ENCODE measurements at regions of chr5 and their contacts with region 1.

Region 1: DNA sequence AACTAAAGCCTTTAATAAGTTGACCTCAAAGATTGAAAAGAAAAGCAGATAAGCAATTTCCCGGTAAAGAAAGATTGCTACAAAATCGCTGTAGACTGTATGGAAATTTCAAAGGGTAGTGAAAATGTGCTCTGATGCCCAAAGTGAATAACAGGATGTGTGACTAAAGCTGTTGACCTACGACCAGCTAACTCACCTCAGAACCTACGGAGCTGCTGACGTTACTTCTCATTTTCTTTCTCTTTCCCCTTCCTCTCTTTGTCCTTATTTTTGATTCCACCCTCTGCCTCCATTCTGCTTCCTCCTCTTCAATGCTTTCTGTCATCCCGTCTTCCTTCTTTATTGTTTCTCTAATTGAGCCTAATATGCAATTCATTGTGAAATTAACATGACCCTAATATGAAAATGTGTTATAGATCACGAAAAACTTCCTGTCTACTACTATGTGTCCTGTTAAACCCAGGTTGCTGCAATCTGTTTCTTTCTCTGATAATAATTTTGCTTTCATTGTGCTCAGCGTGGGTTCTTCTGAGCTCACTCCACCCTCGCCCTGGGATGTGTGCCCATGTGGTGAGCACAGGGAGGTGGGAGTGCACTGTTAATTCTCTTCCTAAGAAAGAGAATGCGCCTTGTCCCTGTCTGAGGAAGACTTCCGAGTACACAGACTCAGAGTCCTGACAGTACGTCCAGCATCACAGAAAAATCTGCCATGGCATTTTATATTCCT is 103.0 kb downstream of the PDE4D start:
- DNase-seq: no peak
- ATAC-seq: peak in 6 of 8 donors; percentile 38 to 91 (median 78)
- H3K4me3 ChIP-seq: peak overlapping the region in 4 of 10 donors; percentile 1 to 31 (median 8)
- H3K27ac ChIP-seq: peak overlapping the region in 9 of 10 donors; percentile 1 to 70 (median 49)
- H3K4me1 ChIP-seq: peaks cover 0 to 11% (median 0%) of the 10 kb centered on the region in 9 donors
- H3K27me3 ChIP-seq: peaks cover 0 to 12% (median 0%) of the 10 kb centered on the region in 7 donors
- CTCF ChIP-seq: no peak

Region 2: GRCh38 chr5:59768152-59769040 is 22.2 kb before region 1 on chr5:
- intact Hi-C with region 1: loop called in 1 of 10 experiments (anchors 2 kb)
- DNase-seq: peak; percentile 29 to 56
- ATAC-seq: peak; percentile 58 to 94 (median 81)
- H3K4me3 ChIP-seq: peak overlapping the region; percentile 24 to 71 (median 56)
- H3K27ac ChIP-seq: peak overlapping the region in 6 of 10 donors; percentile 16 to 70 (median 44)
- H3K4me1 ChIP-seq: peaks cover 0 to 28% (median 13%) of the 10 kb centered on the region in 9 donors
- H3K27me3 ChIP-seq: peaks cover 0 to 46% (median 30%) of the 10 kb centered on the region in 7 donors
- CTCF ChIP-seq: no peak

Region 3: GRCh38 chr5:60010328-60010727 is 219.8 kb after region 1 on chr5:
- intact Hi-C with region 1: no loop called
- DNase-seq: no peak
- ATAC-seq: no peak
- H3K4me3 ChIP-seq: no peak overlapping the region
- H3K27ac ChIP-seq: no peak overlapping the region
- H3K4me1 ChIP-seq: no peaks in the 10 kb centered on the region
- H3K27me3 ChIP-seq: no peaks in the 10 kb centered on the region
- CTCF ChIP-seq: peak in 1 of 9 donors; percentile 21

Measured in heart right ventricle (tissue), 16 donors.